Activated CD4-positive, alpha-beta T cell treated with anti-CD3 and anti-CD28 coated beads for 36 hours (primary cell): ENCODE measurements at regions of chr13 and their contacts with region 1.

Region 1: DNA sequence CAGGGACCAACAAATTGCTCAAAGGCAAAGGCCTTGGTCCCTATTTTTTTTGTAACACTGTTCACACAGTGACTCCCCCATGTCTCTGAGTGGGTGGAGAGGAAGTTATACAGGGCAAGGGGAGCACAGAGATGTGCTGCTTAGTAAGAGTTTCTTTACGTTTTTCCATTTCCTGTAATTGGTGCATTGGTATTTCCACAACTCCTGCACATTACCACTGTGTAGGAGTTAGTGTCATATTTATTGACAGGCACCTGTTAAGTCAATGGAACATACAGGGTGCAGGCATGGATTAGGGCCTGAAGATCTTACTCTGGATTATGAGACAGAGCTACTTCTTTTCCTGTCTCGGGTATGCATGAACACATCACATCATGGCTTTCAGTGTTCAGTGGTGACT is 45.2 kb downstream of the SOX21 start:
- DNase-seq: peak; percentile 44
- ATAC-seq: peak; percentile 88
- H3K4me3 Mint-ChIP-seq: no peak overlapping the region
- H3K27ac Mint-ChIP-seq: peak overlapping the region; percentile 89
- H3K4me1 Mint-ChIP-seq: peaks cover 38% of the 10 kb centered on the region
- H3K27me3 Mint-ChIP-seq: peaks cover 21% of the 10 kb centered on the region

Region 2: GRCh38 chr13:92823059-92823458 is 1844.1 kb before region 1 on chr13:
- CTCF ChIA-PET with region 1: no interaction called
- POLR2A ChIA-PET with region 1: no interaction called
- intact Hi-C with region 1: no loop called
- DNase-seq: no peak
- ATAC-seq: no peak
- H3K4me3 Mint-ChIP-seq: no peak overlapping the region
- H3K27ac Mint-ChIP-seq: no peak overlapping the region
- H3K4me1 Mint-ChIP-seq: no peaks in the 10 kb centered on the region
- H3K27me3 Mint-ChIP-seq: no peaks in the 10 kb centered on the region

Region 3: GRCh38 chr13:95044452-95045205 is 377.4 kb after region 1 on chr13:
- CTCF ChIA-PET with region 1: no interaction called
- POLR2A ChIA-PET with region 1: no interaction called
- intact Hi-C with region 1: loop called in 1 of 2 experiments (anchors 5 kb)
- DNase-seq: no peak
- ATAC-seq: no peak
- H3K4me3 Mint-ChIP-seq: no peak overlapping the region
- H3K27ac Mint-ChIP-seq: no peak overlapping the region
- H3K4me1 Mint-ChIP-seq: peaks cover 8% of the 10 kb centered on the region
- H3K27me3 Mint-ChIP-seq: no peaks in the 10 kb centered on the region